ENCODE measurements at regions of chr3 and their contacts with region 1.

Region 1: DNA sequence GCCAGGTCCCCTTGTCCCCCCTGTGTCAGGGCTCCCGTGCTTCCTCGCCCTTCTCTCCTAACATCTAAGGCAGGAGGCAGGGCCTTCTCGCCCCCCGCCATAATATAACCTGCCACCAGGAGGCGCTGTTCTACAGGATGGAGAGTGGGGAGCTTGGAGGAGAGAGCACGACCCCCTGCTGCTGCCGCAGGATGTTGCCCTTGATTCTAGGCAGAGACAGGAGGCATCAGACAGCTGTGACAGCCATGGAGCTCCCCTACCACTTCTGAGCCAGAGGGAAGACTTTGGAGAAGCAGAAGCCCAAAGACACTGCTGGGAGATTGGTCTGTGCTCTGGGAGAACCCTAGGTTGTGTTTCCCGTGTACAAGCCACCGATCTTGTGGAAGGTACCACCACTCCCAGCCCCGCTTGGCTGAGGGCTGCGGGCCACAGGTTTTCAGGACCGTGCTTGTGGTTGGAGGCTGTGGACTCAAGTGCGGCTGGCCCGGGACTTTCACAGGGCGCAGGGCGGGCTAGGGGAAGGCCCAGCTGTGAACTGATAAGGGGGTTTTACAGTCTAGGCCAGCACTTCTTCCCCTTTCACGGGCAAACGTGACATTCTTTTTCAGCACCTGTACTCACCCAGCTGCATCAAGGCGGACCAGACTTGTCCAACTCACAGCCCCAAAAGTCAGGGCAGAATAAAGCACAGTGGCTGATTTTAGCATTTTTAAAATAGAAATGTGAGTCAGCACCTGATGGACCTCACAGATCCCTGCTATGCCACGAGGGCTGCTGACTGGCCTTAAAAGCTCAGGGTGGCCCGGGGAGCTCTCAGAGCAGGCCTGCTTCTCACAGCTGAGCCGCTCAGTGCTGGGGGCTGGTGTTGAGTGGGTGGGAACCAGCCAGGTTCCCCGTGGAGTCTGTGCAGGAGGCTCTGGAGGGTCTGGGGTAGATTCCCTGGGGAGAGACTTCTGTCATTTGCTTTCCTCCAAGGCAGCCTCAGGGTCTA is 2.6 kb upstream of the TIGIT start:
- DNase-seq: peak; percentile 95
- ATAC-seq: peak; percentile 79
- H3K4me3 Mint-ChIP-seq: peak overlapping the region; percentile 80
- H3K27ac Mint-ChIP-seq: peak overlapping the region; percentile 95
- H3K4me1 Mint-ChIP-seq: peaks cover 57% of the 10 kb centered on the region
- H3K27me3 Mint-ChIP-seq: no peaks in the 10 kb centered on the region
- CTCF ChIP-seq: peak; percentile 94

Region 2: GRCh38 chr3:114171677-114172076 is 119.5 kb before region 1 on chr3:
- CTCF ChIA-PET with region 1: no interaction called
- POLR2A ChIA-PET with region 1: no interaction called
- intact Hi-C with region 1: no loop called
- DNase-seq: no peak
- ATAC-seq: no peak
- H3K4me3 Mint-ChIP-seq: no peak overlapping the region
- H3K27ac Mint-ChIP-seq: no peak overlapping the region
- H3K4me1 Mint-ChIP-seq: peaks cover 3% of the 10 kb centered on the region
- H3K27me3 Mint-ChIP-seq: peaks cover 2% of the 10 kb centered on the region
- CTCF ChIP-seq: no peak

Region 3: GRCh38 chr3:114223143-114223542 is 68.1 kb before region 1 on chr3:
- CTCF ChIA-PET with region 1: interaction called, 23 read pairs
- POLR2A ChIA-PET with region 1: interaction called, 159 read pairs
- intact Hi-C with region 1: loop called (anchors 5 kb)
- DNase-seq: peak; percentile 57
- ATAC-seq: peak; percentile 68
- H3K4me3 Mint-ChIP-seq: peak overlapping the region; percentile 4
- H3K27ac Mint-ChIP-seq: peak overlapping the region; percentile 99
- H3K4me1 Mint-ChIP-seq: peaks cover 88% of the 10 kb centered on the region
- H3K27me3 Mint-ChIP-seq: no peaks in the 10 kb centered on the region
- CTCF ChIP-seq: no peak

Region 4: DNA sequence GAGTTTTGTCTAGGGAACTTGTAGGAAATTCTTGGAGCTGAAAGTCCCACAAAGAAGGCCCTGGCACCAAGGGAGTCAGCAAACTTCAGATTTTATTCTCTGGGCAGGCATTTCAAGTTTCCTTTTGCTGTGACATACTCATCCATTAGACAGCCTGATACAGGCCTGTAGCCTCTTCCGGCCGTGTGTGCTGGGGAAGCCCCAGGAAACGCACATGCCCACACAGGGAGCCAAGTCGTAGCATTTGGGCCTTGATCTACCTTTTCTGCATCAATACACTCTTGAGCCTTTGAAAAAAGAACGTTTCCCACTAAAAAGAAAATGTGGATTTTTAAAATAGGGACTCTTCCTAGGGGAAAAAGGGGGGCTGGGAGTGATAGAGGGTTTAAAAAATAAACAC is 17.6 kb after region 1 on chr3:
- CTCF ChIA-PET with region 1: interaction called, 30 read pairs
- POLR2A ChIA-PET with region 1: interaction called, 30 read pairs
- intact Hi-C with region 1: no loop called
- DNase-seq: peak; percentile 71
- ATAC-seq: peak; percentile 72
- H3K4me3 Mint-ChIP-seq: peak overlapping the region; percentile 61
- H3K27ac Mint-ChIP-seq: peak overlapping the region; percentile 96
- H3K4me1 Mint-ChIP-seq: peaks cover 63% of the 10 kb centered on the region
- H3K27me3 Mint-ChIP-seq: no peaks in the 10 kb centered on the region
- CTCF ChIP-seq: no peak

Region 5: DNA sequence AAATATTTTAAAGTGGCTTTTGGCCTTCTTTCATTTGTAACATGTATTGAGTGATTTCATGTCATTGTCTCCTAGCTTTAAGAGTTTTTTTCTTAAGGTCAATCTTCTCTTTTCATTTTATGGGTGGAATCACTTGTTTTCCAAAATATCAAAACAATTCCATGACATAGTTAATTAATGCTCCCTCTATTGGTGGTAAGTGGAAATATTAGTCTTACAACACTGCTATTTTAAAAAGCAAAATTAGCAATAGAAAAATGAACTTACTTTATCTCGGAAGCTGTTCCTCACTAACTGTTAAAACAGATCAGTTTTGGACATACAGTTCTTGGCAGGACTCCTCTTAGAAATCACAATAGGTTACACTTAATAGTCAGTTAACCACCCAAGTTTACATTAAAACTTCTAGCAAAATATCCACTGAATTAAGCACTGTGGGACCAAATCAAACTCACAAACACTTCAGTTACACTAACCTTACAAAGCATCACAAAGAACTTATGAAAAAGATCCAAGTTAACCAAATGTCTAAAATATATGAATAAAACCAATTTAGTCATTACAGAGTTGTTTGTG is 45.0 kb after region 1 on chr3:
- CTCF ChIA-PET with region 1: interaction called, 10 read pairs
- POLR2A ChIA-PET with region 1: interaction called, 5 read pairs
- intact Hi-C with region 1: loop called (anchors 5 kb)
- DNase-seq: no peak
- ATAC-seq: no peak
- H3K4me3 Mint-ChIP-seq: no peak overlapping the region
- H3K27ac Mint-ChIP-seq: peak overlapping the region; percentile 97
- H3K4me1 Mint-ChIP-seq: peaks cover 59% of the 10 kb centered on the region
- H3K27me3 Mint-ChIP-seq: no peaks in the 10 kb centered on the region
- CTCF ChIP-seq: peak; percentile 66

Region 6: GRCh38 chr3:114383875-114384557 is 92.8 kb after region 1 on chr3:
- CTCF ChIA-PET with region 1: interaction called, 15 read pairs
- POLR2A ChIA-PET with region 1: no interaction called
- intact Hi-C with region 1: no loop called
- DNase-seq: peak; percentile 83
- ATAC-seq: peak; percentile 96
- H3K4me3 Mint-ChIP-seq: no peak overlapping the region
- H3K27ac Mint-ChIP-seq: no peak overlapping the region
- H3K4me1 Mint-ChIP-seq: peaks cover 7% of the 10 kb centered on the region
- H3K27me3 Mint-ChIP-seq: no peaks in the 10 kb centered on the region
- CTCF ChIP-seq: peak; percentile 93

Measured in activated CD8-positive, alpha-beta T cell treated with anti-CD3 and anti-CD28 coated beads for 36 hours (primary cell).